ENCODE measurements at regions of chr1 and their contacts with region 1.

Region 1: GRCh38 chr1:157948312-157949073 is 45.0 kb upstream of the KIRREL1 start:
- DNase-seq: peak; percentile 62
- ATAC-seq: peak; percentile 96
- H3K4me3 ChIP-seq: no peak overlapping the region
- H3K27ac ChIP-seq: no peak overlapping the region
- H3K4me1 ChIP-seq: no peaks in the 10 kb centered on the region
- H3K27me3 ChIP-seq: peaks cover 73% of the 10 kb centered on the region
- CTCF ChIP-seq: peak; percentile 81

Region 2: DNA sequence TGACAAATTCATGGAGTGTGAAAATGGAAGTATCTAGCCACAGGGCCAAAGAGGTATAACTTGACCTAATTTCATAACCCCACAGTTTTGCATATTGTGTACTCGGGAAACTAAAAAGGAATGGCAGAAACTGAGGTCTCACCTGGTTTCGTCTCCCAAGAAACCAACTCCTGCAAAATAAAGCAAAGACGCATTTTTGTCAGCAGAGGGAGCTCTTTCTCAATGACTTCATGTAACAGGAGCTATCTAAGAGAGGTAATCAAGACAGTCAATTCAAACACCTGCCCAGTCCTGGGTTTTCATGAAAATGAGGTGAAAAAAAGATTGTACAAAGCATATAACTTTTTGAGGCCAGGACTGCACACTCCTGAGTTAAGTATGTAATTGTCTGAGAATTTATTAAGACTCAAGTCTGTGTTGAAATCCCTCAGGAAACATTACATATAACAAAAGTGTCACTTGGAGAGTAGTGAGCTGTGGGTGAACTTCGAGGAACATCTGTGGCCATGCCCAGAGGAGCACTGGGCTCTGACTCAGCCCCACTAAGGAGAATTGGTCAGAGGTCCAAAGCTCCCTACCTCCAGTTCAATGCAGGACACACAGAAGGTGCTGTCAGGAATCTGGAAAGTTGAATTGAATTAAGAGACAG is 368.2 kb before region 1 on chr1:
- CTCF ChIA-PET with region 1: no interaction called
- POLR2A ChIA-PET with region 1: no interaction called
- intact Hi-C with region 1: loop called (anchors 1 kb)
- DNase-seq: peak; percentile 90
- ATAC-seq: peak; percentile 70
- H3K4me3 ChIP-seq: no peak overlapping the region
- H3K27ac ChIP-seq: no peak overlapping the region
- H3K4me1 ChIP-seq: no peaks in the 10 kb centered on the region
- H3K27me3 ChIP-seq: peaks cover 58% of the 10 kb centered on the region
- CTCF ChIP-seq: peak; percentile 95

Region 3: DNA sequence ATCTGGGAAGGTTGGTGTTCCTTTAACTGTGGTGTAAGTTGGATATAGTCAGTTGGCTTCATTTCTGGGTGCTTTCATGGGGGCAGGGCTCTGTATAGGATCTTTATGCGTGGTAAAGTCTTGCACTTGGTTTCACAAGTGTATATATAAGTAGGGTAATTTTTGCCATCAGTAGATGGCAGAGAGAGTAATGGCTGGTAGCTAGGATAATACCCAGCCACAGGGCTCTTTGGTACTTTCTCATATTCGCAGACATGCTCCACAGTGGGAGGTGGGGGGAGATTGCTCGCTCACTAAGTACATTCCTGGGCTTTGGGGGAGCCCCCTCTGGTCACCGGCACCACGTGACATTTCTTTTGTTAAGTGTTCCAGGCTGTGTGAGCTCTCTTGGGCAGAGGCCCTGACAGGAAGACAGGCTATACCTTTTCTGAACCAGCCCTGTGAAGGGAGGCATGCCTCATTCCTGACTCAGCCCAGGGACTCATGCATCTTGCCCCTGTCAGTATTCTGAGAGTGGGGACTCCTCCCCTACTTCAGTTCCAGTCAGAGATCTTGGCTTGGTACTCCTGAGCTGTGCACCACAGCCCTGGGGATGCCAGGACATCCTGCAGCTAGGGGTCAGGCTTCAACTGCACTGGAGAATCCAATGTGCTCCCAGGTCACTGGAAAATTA is 209.1 kb before region 1 on chr1:
- CTCF ChIA-PET with region 1: no interaction called
- POLR2A ChIA-PET with region 1: no interaction called
- intact Hi-C with region 1: no loop called
- DNase-seq: no peak
- ATAC-seq: no peak
- H3K4me3 ChIP-seq: no peak overlapping the region
- H3K27ac ChIP-seq: no peak overlapping the region
- H3K4me1 ChIP-seq: no peaks in the 10 kb centered on the region
- H3K27me3 ChIP-seq: no peaks in the 10 kb centered on the region
- CTCF ChIP-seq: no peak

Region 4: DNA sequence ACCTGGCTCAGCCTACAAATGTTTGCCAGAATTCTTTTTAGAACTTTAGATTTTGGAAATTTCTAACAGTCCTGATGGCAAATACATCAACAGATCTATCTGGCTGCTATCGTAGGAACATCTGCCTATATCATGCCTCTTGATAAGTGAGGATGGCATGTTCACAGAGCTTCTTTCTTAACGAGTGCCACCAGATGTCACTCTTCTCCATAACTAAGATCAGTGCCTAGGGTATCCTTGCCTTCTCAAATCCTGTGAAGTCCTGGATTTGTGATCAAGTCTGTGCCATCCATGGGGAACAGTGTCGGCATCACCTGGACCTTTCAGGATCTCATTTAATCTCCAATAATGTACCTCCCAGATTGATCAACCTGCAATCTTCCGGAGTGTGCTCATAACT is 70.4 kb before region 1 on chr1:
- CTCF ChIA-PET with region 1: interaction called, 6 read pairs
- POLR2A ChIA-PET with region 1: interaction called, 3 read pairs
- intact Hi-C with region 1: loop called (anchors 1 kb)
- DNase-seq: peak; percentile 67
- ATAC-seq: peak; percentile 95
- H3K4me3 ChIP-seq: no peak overlapping the region
- H3K27ac ChIP-seq: no peak overlapping the region
- H3K4me1 ChIP-seq: no peaks in the 10 kb centered on the region
- H3K27me3 ChIP-seq: peaks cover 32% of the 10 kb centered on the region; the same call in 1 of the 2 replicates
- CTCF ChIP-seq: peak; percentile 78

Measured in PC-3 (cell line).